Sigmoid colon (tissue), 7 donors: ENCODE measurements at regions of chr9 and their contacts with region 1.

Region 1: DNA sequence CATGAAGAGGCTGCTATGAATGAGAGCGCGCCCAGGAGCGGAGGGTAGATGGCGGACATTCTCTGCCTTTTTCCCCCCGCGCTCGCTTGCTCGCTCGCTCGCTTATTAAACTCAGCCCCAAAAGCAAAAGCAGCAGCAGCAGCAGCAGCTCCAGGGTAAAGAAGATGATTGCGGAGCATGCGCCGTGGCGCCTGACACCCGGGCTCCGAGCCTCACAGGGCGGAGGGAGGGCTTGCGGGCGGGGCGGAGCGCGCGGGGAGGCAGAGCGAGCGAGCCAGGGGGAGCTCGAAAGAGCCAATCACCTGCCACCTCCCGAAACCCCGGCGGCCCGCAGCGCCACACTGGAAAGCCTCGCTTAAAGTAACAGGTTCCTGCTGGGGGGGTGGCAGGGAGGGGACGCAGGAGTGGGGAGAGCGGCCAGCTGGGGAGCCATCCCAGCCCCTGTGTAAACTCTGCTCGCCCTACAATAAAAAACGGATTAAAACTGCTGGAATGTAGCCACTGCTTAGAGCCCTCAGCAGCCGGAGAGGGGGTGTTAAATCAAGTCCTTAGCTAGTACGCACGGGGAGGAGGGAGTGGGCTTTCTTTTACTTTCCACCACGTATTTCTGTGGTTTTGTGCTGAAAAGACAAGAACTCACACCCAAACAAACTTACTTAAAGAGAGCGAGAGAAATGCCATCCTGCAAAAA is at the start of gene MLLT3:
- DNase-seq: peak; percentile 98
- H3K4me3 ChIP-seq: peak within 1 kb of the TSS; percentile 86 to 97 (median 92)
- H3K27ac ChIP-seq: peak within 1 kb of the TSS; percentile 93 to 95 (median 94)
- H3K4me1 ChIP-seq: peaks cover 0 to 40% (median 30%) of the 10 kb centered on the region in 4 donors
- H3K27me3 ChIP-seq: no peaks in the 10 kb centered on the region
- CTCF ChIP-seq: no peak
- EP300 ChIP-seq: no peak
- POLR2A ChIP-seq: peak; percentile 69 to 76
- total RNA-seq, gene MLLT3: 19.0 to 27.1 (median 24.2) TPM

Region 2: DNA sequence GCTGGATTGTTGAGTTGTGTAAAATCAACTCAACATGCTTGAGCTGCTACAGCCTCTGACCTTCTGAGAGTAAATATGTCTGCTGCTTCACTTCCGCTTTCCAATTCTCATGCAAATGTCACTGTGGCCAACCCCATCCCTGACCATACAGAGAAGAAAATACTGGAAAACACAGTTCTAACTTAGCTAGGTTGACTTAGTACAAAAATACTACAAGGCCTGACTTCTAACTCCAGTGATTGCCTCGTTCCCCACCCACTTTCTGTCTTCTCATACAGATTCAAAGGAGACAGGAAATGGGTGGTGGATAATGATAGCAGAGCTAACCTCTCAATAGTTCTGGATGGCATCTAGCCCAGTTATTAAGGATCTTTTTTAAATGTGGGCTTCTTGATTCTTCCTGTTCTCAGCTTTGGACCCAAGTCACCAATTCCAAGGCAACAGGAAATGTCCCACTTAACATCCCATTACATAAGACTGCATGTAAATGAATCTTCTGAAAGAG is 607.0 kb before region 1 on chr9:
- intact Hi-C with region 1: no loop called
- DNase-seq: no peak
- H3K4me3 ChIP-seq: no peak overlapping the region
- H3K27ac ChIP-seq: no peak overlapping the region
- H3K4me1 ChIP-seq: no peaks in the 10 kb centered on the region
- H3K27me3 ChIP-seq: no peaks in the 10 kb centered on the region
- CTCF ChIP-seq: no peak
- EP300 ChIP-seq: no peak
- POLR2A ChIP-seq: no peak

Region 3: GRCh38 chr9:20178197-20178596 is 444.3 kb before region 1 on chr9:
- intact Hi-C with region 1: no loop called
- DNase-seq: no peak
- H3K4me3 ChIP-seq: no peak overlapping the region
- H3K27ac ChIP-seq: no peak overlapping the region
- H3K4me1 ChIP-seq: no peaks in the 10 kb centered on the region
- H3K27me3 ChIP-seq: no peaks in the 10 kb centered on the region
- CTCF ChIP-seq: no peak
- EP300 ChIP-seq: no peak
- POLR2A ChIP-seq: no peak

Region 4: GRCh38 chr9:20356403-20357035 is 266.0 kb before region 1 on chr9:
- intact Hi-C with region 1: loop called (anchors 2 kb)
- DNase-seq: peak; percentile 81
- H3K4me3 ChIP-seq: peak overlapping the region in 3 of 4 donors; percentile 19 to 24 (median 24)
- H3K27ac ChIP-seq: peak overlapping the region; percentile 49 to 76 (median 60)
- H3K4me1 ChIP-seq: peaks cover 0 to 45% (median 28%) of the 10 kb centered on the region in 4 donors
- H3K27me3 ChIP-seq: no peaks in the 10 kb centered on the region
- CTCF ChIP-seq: peak; percentile 26 to 69 (median 40)
- EP300 ChIP-seq: no peak
- POLR2A ChIP-seq: no peak

Region 5: DNA sequence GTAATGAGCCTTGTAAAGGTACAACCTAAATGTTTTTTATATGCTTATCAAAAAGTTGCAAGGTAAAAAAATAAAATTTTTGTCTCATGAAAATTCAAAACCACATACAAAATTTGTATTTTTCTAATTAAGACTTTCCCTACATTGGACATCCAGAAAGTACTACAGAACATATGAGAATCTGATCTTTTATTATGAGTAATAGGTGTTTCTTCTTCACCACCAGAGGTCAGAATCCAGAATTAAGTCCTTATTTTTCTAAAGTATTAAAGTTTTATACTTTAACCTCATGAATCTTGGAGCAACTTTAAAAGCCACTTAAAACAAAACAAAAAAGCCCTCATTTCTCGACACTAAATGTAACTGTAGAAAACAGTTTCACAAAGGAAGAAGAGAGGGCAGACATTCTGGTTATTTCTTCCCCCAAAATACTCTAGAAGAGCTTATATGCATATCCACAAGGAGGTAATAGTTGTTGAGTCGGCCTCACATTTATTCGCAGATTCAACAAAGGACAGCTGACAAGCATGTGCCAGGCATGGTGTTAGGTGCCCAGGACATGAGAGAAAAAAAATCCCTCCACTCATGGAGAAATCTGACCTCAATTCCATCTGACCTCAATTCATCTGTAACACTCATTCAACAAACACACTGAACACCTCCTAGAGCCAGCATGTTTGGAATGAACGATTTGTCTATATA is 69.5 kb before region 1 on chr9:
- intact Hi-C with region 1: loop called (anchors 5 kb)
- DNase-seq: no peak
- H3K4me3 ChIP-seq: no peak overlapping the region
- H3K27ac ChIP-seq: peak overlapping the region in 1 of 4 donors; percentile 19
- H3K4me1 ChIP-seq: peaks cover 0 to 61% (median 47%) of the 10 kb centered on the region in 4 donors
- H3K27me3 ChIP-seq: no peaks in the 10 kb centered on the region
- CTCF ChIP-seq: peak in 1 of 4 experiments; percentile 10
- EP300 ChIP-seq: no peak
- POLR2A ChIP-seq: no peak

Region 6: GRCh38 chr9:20884985-20885593 is 262.6 kb after region 1 on chr9:
- intact Hi-C with region 1: loop called (anchors 5 kb)
- DNase-seq: peak; percentile 69
- H3K4me3 ChIP-seq: no peak overlapping the region
- H3K27ac ChIP-seq: no peak overlapping the region
- H3K4me1 ChIP-seq: no peaks in the 10 kb centered on the region
- H3K27me3 ChIP-seq: no peaks in the 10 kb centered on the region
- CTCF ChIP-seq: peak in 3 of 4 experiments; percentile 49 to 69 (median 50)
- EP300 ChIP-seq: no peak
- POLR2A ChIP-seq: no peak

Region 7: GRCh38 chr9:20941174-20941690 is 318.8 kb after region 1 on chr9:
- intact Hi-C with region 1: loop called (anchors 2 kb)
- DNase-seq: peak; percentile 76
- H3K4me3 ChIP-seq: no peak overlapping the region
- H3K27ac ChIP-seq: no peak overlapping the region
- H3K4me1 ChIP-seq: peaks cover 0 to 11% (median 1%) of the 10 kb centered on the region in 4 donors
- H3K27me3 ChIP-seq: no peaks in the 10 kb centered on the region
- CTCF ChIP-seq: peak; percentile 67 to 82 (median 75)
- EP300 ChIP-seq: no peak
- POLR2A ChIP-seq: no peak

Region 8: DNA sequence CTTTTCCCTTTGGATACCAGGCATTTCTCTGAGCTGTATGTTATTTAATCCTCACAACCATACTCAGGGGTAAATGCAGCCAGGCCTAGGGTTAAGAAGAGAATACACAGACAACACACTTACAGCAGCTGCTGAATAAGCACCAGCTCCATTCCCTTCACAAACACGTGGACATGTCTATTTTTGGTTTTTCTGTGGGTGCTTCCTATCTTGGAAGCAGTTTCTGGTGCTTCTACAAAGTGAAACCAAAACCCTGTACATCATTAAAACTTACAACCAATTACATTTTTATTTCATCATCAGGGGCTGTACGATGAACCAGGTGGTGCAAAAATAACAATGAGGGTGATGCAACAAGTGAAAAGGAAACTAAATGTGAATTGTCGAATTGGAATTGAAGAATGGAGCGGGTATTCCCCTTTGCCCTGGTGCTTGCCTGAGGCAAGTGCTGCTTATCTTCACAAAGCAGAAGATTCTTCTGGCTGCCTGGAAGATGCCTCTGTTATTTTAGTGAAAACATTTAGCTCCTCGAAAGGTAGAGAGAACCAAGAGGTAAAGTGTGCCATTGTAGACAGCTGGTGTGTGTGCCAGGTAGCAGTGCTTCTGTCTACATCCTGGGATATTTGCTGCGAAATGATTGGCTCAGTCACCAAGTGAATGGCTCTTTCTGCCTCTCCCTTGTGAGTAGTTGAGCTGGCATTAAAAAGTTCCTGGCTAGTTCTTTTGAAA is 473.9 kb after region 1 on chr9:
- intact Hi-C with region 1: loop called (anchors 5 kb)
- DNase-seq: no peak
- H3K4me3 ChIP-seq: peak overlapping the region; percentile 11 to 42 (median 32)
- H3K27ac ChIP-seq: peak overlapping the region; percentile 70 to 84 (median 78)
- H3K4me1 ChIP-seq: peaks cover 0 to 20% (median 12%) of the 10 kb centered on the region in 4 donors
- H3K27me3 ChIP-seq: no peaks in the 10 kb centered on the region
- CTCF ChIP-seq: no peak
- EP300 ChIP-seq: no peak
- POLR2A ChIP-seq: no peak